WTC11 (cell line): ENCODE measurements at regions of chr1 and their contacts with region 1.

Region 1: GRCh38 chr1:11037740-11038182 is 9.3 kb downstream of the MASP2 start:
- DNase-seq: peak; percentile 91
- ATAC-seq: peak; percentile 98
- H3K4me3 Mint-ChIP-seq: no peak overlapping the region
- H3K27ac Mint-ChIP-seq: no peak overlapping the region
- H3K4me1 Mint-ChIP-seq: peaks cover 2% of the 10 kb centered on the region; the same call in 1 of the 2 replicates
- H3K27me3 Mint-ChIP-seq: no peaks in the 10 kb centered on the region
- CTCF ChIP-seq: peak; percentile 93

Region 2: GRCh38 chr1:10960411-10961299 is 77.1 kb before region 1 on chr1:
- CTCF ChIA-PET with region 1: interaction called, 12 read pairs
- POLR2A ChIA-PET with region 1: no interaction called
- DNase-seq: peak; percentile 97
- ATAC-seq: peak; percentile 86
- H3K4me3 Mint-ChIP-seq: peak overlapping the region; percentile 40
- H3K27ac Mint-ChIP-seq: no peak overlapping the region
- H3K4me1 Mint-ChIP-seq: peaks cover 59% of the 10 kb centered on the region
- H3K27me3 Mint-ChIP-seq: peaks cover 38% of the 10 kb centered on the region
- CTCF ChIP-seq: peak; percentile 98

Region 3: DNA sequence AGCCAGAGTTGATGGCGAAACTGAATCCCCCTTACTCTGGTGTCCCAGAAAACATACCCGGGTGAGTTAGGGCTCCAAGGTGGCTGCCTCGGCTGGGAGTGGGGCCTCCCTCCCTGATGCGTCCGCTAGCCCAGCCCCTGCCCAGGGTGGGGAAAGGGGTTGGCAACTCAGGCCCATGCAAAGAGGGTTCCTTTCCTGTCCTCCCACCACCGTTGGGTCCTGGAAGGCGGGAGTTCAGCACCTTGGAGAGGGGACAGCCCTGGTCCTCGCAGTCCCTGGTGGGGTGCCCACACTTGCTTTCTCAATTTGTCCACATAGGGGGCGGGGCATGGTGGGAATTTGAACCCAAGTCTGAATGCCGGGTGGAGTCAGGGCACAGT is 16.0 kb after region 1 on chr1:
- CTCF ChIA-PET with region 1: interaction called, 59 read pairs
- POLR2A ChIA-PET with region 1: interaction called, 6 read pairs
- DNase-seq: peak; percentile 78
- ATAC-seq: peak; percentile 50
- H3K4me3 Mint-ChIP-seq: no peak overlapping the region
- H3K27ac Mint-ChIP-seq: no peak overlapping the region
- H3K4me1 Mint-ChIP-seq: peaks cover 24% of the 10 kb centered on the region
- H3K27me3 Mint-ChIP-seq: no peaks in the 10 kb centered on the region
- CTCF ChIP-seq: no peak

Region 4: GRCh38 chr1:11072216-11072917 is 34.6 kb after region 1 on chr1:
- CTCF ChIA-PET with region 1: interaction called, 21 read pairs
- POLR2A ChIA-PET with region 1: no interaction called
- DNase-seq: peak; percentile 22
- ATAC-seq: peak; percentile 62
- H3K4me3 Mint-ChIP-seq: no peak overlapping the region
- H3K27ac Mint-ChIP-seq: peak overlapping the region; percentile 54
- H3K4me1 Mint-ChIP-seq: peaks cover 5% of the 10 kb centered on the region
- H3K27me3 Mint-ChIP-seq: no peaks in the 10 kb centered on the region
- CTCF ChIP-seq: no peak

Region 5: DNA sequence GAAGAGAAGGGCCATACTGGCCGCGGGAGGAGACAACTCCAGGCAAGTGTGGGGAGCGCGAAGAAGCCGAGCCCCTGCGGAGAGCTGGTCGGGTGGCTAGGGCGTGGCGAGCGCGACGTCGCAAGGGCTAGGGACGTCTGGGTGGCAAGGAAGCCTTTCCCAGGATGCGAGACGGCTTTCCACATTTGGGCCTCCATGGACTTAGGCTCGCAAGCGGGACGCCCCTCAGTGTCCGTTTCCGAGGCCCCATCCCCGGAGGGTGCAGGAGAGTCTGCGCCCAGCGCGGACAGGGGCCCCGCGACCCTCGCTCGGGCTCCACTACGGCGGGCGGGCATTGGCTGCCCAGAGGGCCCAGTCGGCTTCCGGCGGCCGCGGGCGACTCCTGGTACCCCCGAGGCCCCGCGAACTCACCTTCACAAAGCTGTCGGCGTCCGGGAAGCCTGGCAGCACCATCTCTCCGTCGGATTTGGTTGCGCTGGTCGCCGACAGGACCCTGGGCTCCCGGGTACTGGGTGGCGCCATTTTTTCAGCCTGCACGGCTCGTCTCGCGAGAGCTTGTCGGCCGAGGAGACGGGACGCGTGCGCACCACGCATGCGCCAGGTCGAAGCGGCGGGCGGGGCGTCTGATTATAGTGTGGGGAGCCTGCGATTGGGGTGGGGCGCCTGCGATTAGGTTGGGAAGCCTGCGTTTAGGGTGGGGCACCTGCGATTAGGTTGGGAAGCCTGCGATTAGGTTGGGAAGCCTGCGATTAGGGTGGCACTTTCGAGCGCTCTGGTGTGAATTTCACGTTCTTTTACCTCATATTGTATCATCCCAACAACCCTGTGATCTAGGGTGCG is 61.8 kb after region 1 on chr1 and contains the start of gene EXOSC10:
- CTCF ChIA-PET with region 1: interaction called, 42 read pairs
- POLR2A ChIA-PET with region 1: interaction called, 3 read pairs
- DNase-seq: peak; percentile 96
- ATAC-seq: peak; percentile 93
- H3K4me3 Mint-ChIP-seq: peak within 1 kb of the TSS; percentile 97
- H3K27ac Mint-ChIP-seq: peak within 1 kb of the TSS; percentile 68
- H3K4me1 Mint-ChIP-seq: peaks cover 6% of the 10 kb centered on the region
- H3K27me3 Mint-ChIP-seq: no peaks in the 10 kb centered on the region
- CTCF ChIP-seq: no peak
- total RNA-seq, gene EXOSC10: 62.8 to 73.0 TPM (median 66.2 TPM) in 3 replicates